ENCODE measurements at regions of chr20 and their contacts with region 1.

Region 1: GRCh38 chr20:41095110-41095969 is 42.0 kb upstream of the PLCG1 start:
- DNase-seq: peak; percentile 57
- H3K4me3 Mint-ChIP-seq: no peak overlapping the region
- H3K27ac Mint-ChIP-seq: no peak overlapping the region
- H3K4me1 Mint-ChIP-seq: peaks cover 5% of the 10 kb centered on the region
- H3K27me3 Mint-ChIP-seq: no peaks in the 10 kb centered on the region

Region 2: DNA sequence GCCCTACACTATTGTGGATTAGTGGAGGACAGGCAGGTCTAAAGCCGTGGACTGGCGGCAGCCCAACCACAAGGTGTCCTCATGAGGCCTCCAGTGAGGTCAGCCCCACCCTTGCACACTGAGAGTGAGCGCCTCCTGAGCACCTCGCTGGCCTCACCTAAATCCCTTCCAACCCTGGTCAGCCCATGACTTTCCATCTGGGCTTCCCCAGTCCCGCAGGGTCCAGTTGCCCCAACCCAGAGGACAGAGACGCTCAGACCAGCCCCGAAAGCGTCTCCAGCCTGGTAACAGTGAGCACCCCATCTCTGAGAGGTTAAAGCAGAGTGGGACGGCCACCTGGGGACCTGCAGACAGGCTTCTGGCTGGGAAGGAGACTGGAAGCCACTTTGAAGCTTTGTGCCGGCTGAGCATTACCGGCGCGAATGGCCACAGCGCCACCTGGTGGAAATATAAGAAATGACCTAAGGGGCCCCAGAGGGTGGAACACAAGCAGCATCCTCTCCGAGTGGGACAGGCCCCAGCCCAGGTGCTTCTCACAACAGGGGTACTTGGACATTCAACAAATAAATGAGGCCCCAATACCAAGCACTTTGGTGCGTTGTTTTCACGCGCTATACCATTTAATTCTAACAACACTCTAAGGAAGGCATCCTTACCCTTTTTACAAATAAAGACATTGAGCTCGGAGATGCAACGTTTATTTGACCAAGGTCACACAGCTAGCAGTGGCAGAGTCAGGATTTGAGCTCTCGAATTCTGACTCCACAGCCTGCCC is 132.4 kb before region 1 on chr20:
- CTCF ChIA-PET with region 1: interaction called, 19 read pairs
- POLR2A ChIA-PET with region 1: no interaction called
- DNase-seq: peak; percentile 76
- H3K4me3 Mint-ChIP-seq: no peak overlapping the region
- H3K27ac Mint-ChIP-seq: no peak overlapping the region
- H3K4me1 Mint-ChIP-seq: peaks cover 16% of the 10 kb centered on the region
- H3K27me3 Mint-ChIP-seq: peaks cover 11% of the 10 kb centered on the region

Region 3: DNA sequence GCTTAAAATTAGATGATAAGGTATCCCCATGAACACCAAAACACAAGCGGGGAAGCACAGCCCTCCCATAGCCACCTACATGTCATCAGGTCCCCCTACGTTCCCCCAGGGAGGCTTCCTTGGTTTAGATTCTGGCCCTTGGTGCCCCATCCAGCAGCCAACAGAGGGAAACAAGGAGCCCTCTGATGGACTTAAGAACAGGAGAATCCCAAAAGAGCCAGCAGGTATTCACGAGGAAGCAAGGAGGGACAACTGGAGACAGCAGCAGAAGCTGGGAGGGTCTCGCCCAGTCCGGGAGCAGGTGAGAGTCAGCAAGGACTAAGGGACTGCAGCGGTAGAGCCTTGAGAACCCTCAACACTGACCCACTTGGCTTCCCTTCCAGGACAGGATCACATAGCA is 125.1 kb before region 1 on chr20:
- CTCF ChIA-PET with region 1: interaction called, 19 read pairs
- POLR2A ChIA-PET with region 1: interaction called, 3 read pairs
- DNase-seq: no peak
- H3K4me3 Mint-ChIP-seq: no peak overlapping the region
- H3K27ac Mint-ChIP-seq: no peak overlapping the region
- H3K4me1 Mint-ChIP-seq: peaks cover 12% of the 10 kb centered on the region
- H3K27me3 Mint-ChIP-seq: peaks cover 39% of the 10 kb centered on the region

Region 4: DNA sequence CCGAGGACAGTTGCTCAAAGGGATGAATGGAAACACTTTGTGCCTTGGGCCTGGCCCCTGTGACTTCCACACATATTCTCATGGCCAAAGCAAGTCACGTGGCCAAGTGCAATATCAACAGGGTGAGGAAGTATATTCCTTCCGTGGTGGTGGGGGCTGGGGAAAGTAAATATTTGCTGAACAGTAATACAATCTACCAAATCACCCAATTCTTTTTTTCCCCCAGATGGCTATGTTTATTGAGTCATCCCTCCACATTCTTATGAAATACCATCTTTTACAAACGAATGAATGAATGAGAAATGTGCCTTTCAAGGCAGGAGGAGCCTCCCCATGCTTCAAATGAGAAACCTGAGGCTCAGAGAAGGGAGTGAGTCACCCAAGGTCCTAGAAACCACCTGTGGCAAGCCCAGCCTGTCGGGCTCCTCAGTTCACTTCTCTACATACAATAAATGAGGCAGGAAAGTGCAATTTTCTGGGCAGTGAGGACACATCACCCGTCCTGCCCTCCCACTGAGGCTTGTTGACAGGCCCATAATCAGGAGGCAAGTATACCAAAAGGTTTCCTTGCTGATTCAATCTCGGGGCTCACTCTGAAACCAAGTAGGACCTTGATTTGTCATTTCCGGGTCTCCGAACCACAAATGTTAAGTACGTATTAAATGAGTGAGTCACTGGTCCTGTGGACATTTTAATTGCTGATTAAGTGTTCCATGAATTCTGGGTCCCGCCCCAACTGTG is 92.0 kb before region 1 on chr20:
- CTCF ChIA-PET with region 1: no interaction called
- POLR2A ChIA-PET with region 1: no interaction called
- DNase-seq: peak; percentile 51
- H3K4me3 Mint-ChIP-seq: no peak overlapping the region
- H3K27ac Mint-ChIP-seq: peak overlapping the region; percentile 89
- H3K4me1 Mint-ChIP-seq: peaks cover 37% of the 10 kb centered on the region
- H3K27me3 Mint-ChIP-seq: no peaks in the 10 kb centered on the region

Measured in activated CD4-positive, alpha-beta T cell treated with anti-CD3 and anti-CD28 coated beads, Interleukin-2, amount 10 ng/mL, durations not matched to agents 7 days and 5 days (primary cell).